ENCODE measurements at regions of chr2 and their contacts with region 1.

Region 1: GRCh38 chr2:188788621-188789020 is 185.6 kb upstream of the COL3A1 start:
- DNase-seq: peak in 4 of 5 donors; percentile 70 to 79 (median 72)
- ATAC-seq: peak in 3 of 4 donors; percentile 64 to 76 (median 69)
- H3K4me3 ChIP-seq: peak overlapping the region in 5 of 12 donors; percentile 1 to 31 (median 23)
- H3K27ac ChIP-seq: peak overlapping the region; percentile 22 to 87 (median 77)
- H3K4me1 ChIP-seq: peaks cover 0 to 28% (median 0%) of the 10 kb centered on the region in 12 donors
- H3K27me3 ChIP-seq: no peaks in the 10 kb centered on the region
- CTCF ChIP-seq: no peak
- POLR2A ChIP-seq: no peak

Region 2: DNA sequence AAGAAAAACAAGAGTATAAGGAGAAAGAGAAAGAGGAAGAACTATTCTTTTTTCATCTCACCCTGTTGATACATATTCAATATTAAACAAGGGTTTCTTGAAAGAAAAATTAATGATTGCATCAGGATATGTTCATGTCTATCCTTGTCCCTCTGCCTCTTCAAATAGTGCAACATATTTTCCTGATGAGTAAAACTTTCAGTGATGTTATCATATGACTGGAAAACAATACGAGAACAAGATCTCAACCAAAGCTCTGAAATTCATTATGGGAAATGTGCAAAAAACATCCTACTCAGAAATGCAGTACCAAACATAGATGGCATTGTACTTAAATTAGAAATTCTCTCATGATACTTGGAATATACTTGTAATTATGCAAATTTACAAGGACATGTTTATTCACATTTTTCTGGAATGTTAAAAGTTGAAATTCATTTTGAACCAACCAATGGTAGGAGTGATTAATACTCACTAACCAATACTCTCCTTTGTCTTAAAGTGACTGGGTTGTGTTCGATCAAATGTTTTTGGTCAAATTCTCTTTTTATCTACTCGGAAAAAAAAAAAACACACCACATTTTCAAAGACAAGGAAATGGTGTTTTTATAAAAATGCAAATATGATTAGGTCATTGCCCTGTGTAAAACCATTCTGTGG is 645.9 kb before region 1 on chr2:
- intact Hi-C with region 1: no loop called
- DNase-seq: no peak
- ATAC-seq: no peak
- H3K4me3 ChIP-seq: no peak overlapping the region
- H3K27ac ChIP-seq: no peak overlapping the region
- H3K4me1 ChIP-seq: no peaks in the 10 kb centered on the region
- H3K27me3 ChIP-seq: no peaks in the 10 kb centered on the region
- CTCF ChIP-seq: no peak
- POLR2A ChIP-seq: no peak

Region 3: GRCh38 chr2:188865681-188866080 is 77.1 kb after region 1 on chr2:
- intact Hi-C with region 1: no loop called
- DNase-seq: no peak
- ATAC-seq: no peak
- H3K4me3 ChIP-seq: no peak overlapping the region
- H3K27ac ChIP-seq: no peak overlapping the region
- H3K4me1 ChIP-seq: peaks cover 0 to 11% (median 0%) of the 10 kb centered on the region in 12 donors
- H3K27me3 ChIP-seq: no peaks in the 10 kb centered on the region
- CTCF ChIP-seq: no peak
- POLR2A ChIP-seq: no peak

Region 4: GRCh38 chr2:188969236-188969635 is 180.6 kb after region 1 on chr2:
- intact Hi-C with region 1: loop called in 4 of 10 experiments (anchors 2 to 10 kb)
- DNase-seq: no peak
- ATAC-seq: peak in 2 of 4 donors; percentile 25 to 34
- H3K4me3 ChIP-seq: peak overlapping the region in 2 of 12 donors; percentile 11 to 30
- H3K27ac ChIP-seq: peak overlapping the region in 9 of 12 donors; percentile 17 to 83 (median 53)
- H3K4me1 ChIP-seq: peaks cover 0 to 24% (median 2%) of the 10 kb centered on the region in 12 donors
- H3K27me3 ChIP-seq: no peaks in the 10 kb centered on the region
- CTCF ChIP-seq: no peak
- POLR2A ChIP-seq: no peak

Measured in heart left ventricle (tissue), 16 donors.